ENCODE measurements at regions of chr6 and their contacts with region 1.

Region 1: GRCh38 chr6:43328528-43328927 is 19.9 kb upstream of the CRIP3 start:
- DNase-seq: no peak
- H3K4me3 ChIP-seq: no peak overlapping the region
- H3K27ac ChIP-seq: no peak overlapping the region
- H3K4me1 ChIP-seq: no peaks in the 10 kb centered on the region
- H3K27me3 ChIP-seq: no peaks in the 10 kb centered on the region
- CTCF ChIP-seq: no peak
- POLR2A ChIP-seq: no peak

Region 2: GRCh38 chr6:42890311-42891198 is 438.0 kb before region 1 on chr6:
- intact Hi-C with region 1: loop called (anchors 10 kb)
- DNase-seq: peak; percentile 84
- H3K4me3 ChIP-seq: peak overlapping the region; percentile 75 to 91 (median 90)
- H3K27ac ChIP-seq: peak overlapping the region; percentile 92
- H3K4me1 ChIP-seq: no peaks in the 10 kb centered on the region
- H3K27me3 ChIP-seq: no peaks in the 10 kb centered on the region
- CTCF ChIP-seq: no peak
- POLR2A ChIP-seq: peak; percentile 41

Region 3: GRCh38 chr6:43339168-43339567 is 10.6 kb after region 1 on chr6:
- intact Hi-C with region 1: loop called (anchors 1 kb)
- DNase-seq: no peak
- H3K4me3 ChIP-seq: no peak overlapping the region
- H3K27ac ChIP-seq: no peak overlapping the region
- H3K4me1 ChIP-seq: no peaks in the 10 kb centered on the region
- H3K27me3 ChIP-seq: no peaks in the 10 kb centered on the region
- CTCF ChIP-seq: no peak
- POLR2A ChIP-seq: no peak